ENCODE measurements at regions of chr5 and their contacts with region 1.

Region 1: DNA sequence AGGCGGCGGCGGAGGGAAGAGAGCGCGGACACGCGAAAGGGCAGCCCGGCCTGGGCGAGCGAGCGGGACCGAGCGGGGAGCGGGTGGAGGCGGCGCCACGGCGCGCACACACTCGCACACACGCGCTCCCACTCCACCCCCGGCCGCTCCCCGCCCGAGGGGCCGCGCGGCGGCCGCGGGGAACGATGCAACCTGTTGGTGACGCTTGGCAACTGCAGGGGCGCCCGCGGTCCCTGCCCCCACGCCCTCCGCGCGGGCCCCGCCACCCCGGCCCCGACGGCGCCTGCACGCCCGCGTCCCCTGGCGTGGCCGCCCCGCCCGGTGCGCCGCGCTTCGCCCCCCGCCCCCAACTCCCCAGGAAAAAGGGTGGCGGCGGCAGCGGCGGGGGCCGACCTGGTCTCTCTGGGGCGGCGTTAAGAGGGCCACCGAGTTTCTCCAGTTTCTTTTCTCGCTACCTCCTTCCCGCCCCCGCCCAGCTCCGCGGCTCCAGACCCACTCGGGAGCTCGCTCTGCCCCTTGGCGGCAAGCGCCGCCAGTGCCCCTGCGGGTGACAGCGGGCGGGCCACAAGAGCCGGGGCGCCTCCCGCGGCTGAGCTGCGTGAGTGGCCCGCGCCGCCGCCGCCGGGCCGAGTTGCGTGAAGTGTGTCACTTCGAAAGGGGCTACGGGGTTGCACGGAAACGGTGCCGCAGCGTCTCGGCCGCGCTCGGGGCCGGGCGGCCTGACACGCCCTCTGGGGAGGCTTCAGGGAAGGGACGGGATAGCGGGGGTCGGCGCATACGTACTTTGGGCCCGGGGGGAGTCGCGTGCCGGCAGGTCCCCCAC is at the start of gene NR3C1:
- DNase-seq: peak; percentile 91
- ATAC-seq: peak; percentile 77 to 85
- total RNA-seq, gene NR3C1: 39.0 to 51.7 TPM

Region 2: DNA sequence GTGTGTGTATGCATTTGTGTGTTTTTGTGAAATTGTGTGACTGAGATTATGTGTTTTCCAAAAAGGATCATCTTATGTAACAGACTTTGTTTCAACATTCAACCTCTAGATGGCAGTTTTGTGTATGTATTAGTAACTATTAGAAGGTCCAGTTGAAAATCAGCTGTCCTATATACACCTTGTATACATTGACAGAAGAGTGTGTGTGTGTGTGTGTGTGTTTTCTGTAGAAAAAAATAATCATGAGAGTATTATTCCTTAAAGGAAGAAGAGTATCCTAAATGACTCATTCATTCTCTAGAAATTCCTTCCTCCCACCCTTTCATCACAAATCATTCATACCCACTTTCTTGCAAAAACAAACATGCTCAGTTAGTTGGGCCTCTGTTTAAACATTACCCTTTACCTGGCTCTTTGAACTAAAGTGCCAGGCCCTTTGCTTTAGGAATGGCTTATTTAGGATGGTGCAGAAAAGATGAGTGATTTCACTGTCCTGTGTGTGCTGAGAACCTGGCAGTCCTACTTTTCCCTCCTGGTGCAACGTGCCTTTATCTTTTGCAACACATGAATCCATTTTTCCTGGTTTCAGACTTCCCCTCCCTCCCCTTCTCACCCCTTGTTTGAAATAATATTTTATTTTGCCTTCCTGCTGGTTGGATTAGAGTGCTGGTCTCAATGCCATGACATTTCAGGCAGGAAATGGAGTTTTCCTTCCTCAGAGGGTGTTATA is 481.4 kb before region 1 on chr5:
- intact Hi-C with region 1: loop called in 1 of 2 experiments (anchors 10 kb)
- DNase-seq: no peak
- ATAC-seq: peak; percentile 51 to 59

Region 3: GRCh38 chr5:143002459-143003328 is 401.1 kb before region 1 on chr5:
- intact Hi-C with region 1: loop called in 1 of 2 experiments (anchors 2 kb)
- DNase-seq: peak; percentile 36
- ATAC-seq: peak; percentile 75 to 80

Region 4: DNA sequence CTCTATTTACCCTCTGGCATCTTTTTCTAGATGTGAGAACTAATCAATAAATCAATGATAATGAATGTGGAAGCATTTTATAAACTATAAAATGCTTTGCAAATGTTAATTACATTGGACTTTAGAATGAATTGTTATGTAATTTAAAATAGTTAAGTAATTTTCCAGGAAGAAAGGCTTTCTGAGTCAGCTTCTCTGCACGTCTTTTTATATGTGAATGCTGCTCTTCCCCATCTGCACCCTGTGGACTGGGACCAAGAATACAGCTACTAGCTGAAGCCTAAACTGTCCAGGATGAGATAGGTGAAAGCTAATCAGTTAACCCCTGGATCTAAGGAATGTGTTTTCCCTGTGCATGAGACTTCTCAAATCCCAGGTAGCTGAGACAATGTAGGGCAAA is 293.2 kb before region 1 on chr5:
- intact Hi-C with region 1: loop called in 1 of 2 experiments (anchors 5 kb)
- DNase-seq: no peak
- ATAC-seq: peak in 1 of 2 donors; percentile 48

Region 5: DNA sequence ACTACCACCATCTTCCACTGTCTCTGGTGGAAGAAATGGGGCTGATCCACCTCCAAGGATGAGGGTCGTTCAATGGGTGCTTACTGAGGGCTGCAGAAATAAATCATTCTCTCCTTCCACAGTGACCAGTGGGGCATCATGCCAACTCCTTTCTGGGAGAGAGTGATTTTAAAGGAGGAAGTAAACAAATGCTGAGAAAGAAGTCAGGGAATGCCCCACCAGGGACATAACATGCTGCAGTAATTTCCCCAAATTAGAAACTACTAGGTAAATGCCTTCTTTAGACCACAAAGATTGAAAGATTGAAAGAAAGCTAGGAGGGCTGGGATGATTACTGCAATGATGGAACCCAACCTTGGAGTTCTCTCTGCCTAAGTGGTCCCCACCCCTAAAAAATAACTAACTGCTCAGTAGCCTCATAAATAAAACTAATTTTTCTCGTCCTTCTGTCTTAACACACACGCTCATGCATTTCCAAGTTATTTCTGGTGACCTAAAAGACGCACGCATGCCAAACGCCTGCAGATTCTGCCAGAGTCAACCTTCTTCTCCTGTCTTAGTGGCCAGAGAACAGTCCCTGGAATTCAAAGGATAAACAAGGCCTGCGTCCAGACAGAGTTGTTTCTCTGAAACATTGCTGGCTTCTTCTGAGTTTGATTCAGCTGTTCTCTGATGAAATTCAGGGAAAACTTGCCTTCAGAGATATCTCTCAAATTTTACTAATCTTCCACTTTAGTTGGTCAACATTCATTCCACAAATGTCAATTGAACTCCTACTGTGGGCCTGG is 250.3 kb before region 1 on chr5:
- intact Hi-C with region 1: no loop called
- DNase-seq: peak; percentile 76
- ATAC-seq: peak; percentile 84 to 89

Region 6: GRCh38 chr5:143200781-143201398 is 202.9 kb before region 1 on chr5:
- intact Hi-C with region 1: loop called in 1 of 2 experiments (anchors 5 kb)
- DNase-seq: peak; percentile 60
- ATAC-seq: peak; percentile 97 to 98

Region 7: DNA sequence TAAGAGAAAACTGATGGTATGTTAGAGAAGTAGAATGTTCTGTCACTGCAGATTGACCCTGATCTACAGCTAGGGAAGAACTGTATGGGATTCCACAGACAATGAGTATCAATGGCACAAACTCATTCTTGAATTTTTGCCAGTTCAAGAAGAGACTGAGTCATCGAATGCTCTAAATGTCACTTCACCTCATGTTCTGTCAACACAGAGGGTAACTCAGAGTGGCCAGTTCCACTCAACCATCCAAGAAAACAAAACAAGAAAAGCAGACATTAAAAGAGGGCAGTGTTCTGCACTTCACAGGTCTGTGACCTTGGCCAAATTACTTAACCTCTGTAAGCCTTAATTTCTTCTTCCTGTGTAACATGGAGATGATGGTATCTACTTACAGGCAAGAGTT is 276.0 kb after region 1 on chr5:
- intact Hi-C with region 1: loop called in 1 of 2 experiments (anchors 10 kb)
- DNase-seq: no peak
- ATAC-seq: peak in 1 of 2 donors; percentile 71

Region 8: GRCh38 chr5:143824851-143825720 is 421.3 kb after region 1 on chr5:
- intact Hi-C with region 1: loop called (anchors 5 kb)
- DNase-seq: peak; percentile 84
- ATAC-seq: peak; percentile 96 to 97